PC-9 (cell line): ENCODE measurements at regions of chr11 and their contacts with region 1.

Region 1: DNA sequence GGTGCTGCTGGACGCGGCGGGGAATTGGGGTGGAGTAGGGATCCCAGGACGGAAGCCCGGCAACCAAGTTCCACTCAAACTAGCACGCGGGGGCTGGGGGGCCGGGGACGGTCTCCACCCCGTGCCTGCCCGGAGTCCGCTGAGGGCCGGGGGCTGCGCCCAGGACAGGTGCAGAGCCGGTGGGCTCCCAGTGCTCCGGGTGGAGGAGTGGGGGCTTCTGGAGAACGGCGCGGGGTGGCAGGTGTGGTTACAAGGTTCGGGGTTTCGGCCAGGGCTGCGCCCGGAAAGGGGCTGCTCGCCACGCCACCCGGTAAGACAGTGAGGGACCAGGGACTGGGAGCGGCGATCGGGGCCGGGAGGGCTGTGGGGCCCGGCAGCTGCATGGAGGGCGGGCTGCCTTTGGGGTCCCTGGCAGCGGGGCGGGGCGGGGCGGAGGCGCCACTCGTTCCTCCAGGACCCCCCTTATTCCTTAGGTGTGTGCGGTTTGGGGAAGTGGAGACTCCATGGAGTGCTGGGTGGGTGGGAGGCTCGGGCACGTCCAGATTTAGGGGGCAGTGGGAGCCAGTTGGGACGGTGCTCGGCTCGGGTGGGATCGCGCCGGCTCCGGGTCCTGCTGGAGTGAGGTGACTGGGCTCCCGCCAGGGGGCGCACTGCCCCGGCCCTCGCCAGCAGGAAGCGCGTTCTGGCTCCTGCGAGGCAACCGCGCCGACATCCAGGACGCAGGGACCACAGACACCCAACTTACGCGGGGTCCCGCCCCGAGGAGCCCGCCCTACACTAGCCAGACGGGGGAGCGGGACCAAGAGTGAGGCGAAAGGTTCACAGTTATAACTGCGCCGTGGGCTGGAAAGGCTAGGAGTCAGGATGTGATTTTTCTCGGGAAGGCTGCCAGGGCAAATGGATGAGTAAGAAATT is 868 bp downstream of the TSPAN18 start:
- DNase-seq: peak in 1 of 2 experiments; percentile 58
- H3K4me3 ChIP-seq: no peak overlapping the region
- H3K27ac ChIP-seq: no peak overlapping the region
- H3K4me1 ChIP-seq: no peaks in the 10 kb centered on the region
- H3K27me3 ChIP-seq: peaks cover 16% of the 10 kb centered on the region; the same call in 1 of the 2 replicates
- CTCF ChIP-seq: peak; percentile 87

Region 2: GRCh38 chr11:44793350-44794090 is 65.9 kb after region 1 on chr11:
- CTCF ChIA-PET with region 1: no interaction called
- POLR2A ChIA-PET with region 1: no interaction called
- intact Hi-C with region 1: no loop called
- DNase-seq: no peak
- H3K4me3 ChIP-seq: no peak overlapping the region
- H3K27ac ChIP-seq: no peak overlapping the region
- H3K4me1 ChIP-seq: no peaks in the 10 kb centered on the region
- H3K27me3 ChIP-seq: peaks cover 96% of the 10 kb centered on the region
- CTCF ChIP-seq: no peak

Region 3: DNA sequence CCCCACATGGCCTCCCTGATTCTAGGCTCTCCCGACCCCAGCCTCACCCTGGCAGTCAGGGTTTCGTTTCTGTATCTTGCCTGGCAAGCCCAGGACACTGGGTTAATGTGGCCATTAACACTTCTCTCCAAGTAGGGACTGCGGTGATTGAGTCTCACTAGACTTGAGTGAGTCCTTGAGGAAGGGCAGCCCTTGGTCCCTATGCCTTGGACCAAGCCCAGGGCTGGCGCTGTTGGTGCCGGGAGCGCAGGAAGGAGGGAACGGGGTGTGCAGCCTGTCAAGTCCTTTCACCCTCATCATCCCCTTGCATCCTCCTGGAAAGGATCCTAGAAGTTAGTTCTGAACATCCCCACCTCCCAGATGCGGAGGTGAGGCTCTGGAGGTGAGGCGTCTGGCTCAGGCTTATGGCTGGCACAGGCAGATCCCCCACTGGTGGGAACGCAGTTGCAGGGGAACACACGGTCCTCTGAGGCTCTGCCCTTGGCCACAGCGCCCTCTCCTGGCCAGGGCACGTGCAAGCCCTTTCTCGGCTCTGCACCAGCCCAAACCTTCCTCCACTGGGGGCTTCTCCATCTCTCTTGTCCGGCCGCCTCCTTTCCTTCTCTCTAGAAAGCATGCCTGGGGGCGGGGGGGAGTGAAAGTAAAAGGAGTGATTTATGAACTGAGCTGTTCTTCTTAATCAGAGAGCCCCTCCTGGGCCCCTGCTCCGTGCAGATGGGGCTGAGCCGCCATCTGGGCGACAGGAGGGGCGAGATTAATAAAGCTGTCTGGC is 166.4 kb after region 1 on chr11:
- CTCF ChIA-PET with region 1: no interaction called
- POLR2A ChIA-PET with region 1: no interaction called
- intact Hi-C with region 1: loop called (anchors 10 kb)
- DNase-seq: peak in 1 of 2 experiments; percentile 37
- H3K4me3 ChIP-seq: no peak overlapping the region
- H3K27ac ChIP-seq: no peak overlapping the region
- H3K4me1 ChIP-seq: no peaks in the 10 kb centered on the region
- H3K27me3 ChIP-seq: peaks cover 84% of the 10 kb centered on the region
- CTCF ChIP-seq: peak; percentile 85

Region 4: DNA sequence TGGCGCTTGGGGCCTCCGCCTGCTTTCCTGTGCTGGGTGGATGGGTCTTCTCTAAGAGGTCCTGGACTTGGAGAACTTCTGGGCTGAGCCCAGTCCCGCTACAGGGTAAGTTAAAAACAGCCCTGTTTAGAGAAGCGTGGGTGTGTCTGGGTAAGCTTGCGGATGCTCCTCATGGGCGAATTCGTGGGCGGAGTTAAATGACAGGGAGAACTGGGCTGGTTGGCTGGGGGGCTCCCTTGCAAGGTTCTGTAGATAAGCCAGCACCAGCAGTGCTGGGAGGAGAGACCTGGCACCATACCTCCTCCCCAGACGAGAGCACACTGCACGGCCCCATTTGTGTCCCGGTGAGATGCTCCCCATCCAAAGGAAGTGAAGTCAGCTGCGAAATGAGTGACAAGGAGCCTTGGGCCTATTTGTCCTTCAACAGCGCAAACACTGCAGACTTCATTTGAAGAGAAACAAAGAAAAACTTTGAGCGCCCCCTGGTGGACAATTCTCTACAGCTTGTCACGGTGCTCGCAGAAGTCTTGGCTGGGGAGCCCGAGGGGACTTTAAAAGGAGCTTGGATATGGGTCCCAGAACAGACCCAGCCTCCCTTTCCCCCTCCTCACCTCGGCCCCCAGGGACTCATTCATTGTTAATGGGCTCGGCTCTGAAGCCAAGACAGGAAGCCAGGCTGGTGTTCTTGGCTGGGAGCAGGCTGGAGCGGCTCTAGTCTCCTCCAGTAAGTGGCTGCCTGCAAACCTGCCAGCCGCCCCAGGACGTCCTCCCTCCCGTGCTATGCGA is 183.6 kb after region 1 on chr11:
- CTCF ChIA-PET with region 1: no interaction called
- POLR2A ChIA-PET with region 1: no interaction called
- intact Hi-C with region 1: loop called (anchors 5 kb)
- DNase-seq: peak; percentile 59 to 69
- H3K4me3 ChIP-seq: no peak overlapping the region
- H3K27ac ChIP-seq: no peak overlapping the region
- H3K4me1 ChIP-seq: no peaks in the 10 kb centered on the region
- H3K27me3 ChIP-seq: peaks cover 46% of the 10 kb centered on the region
- CTCF ChIP-seq: peak; percentile 95